Endothelial cell of umbilical vein (primary cell): ENCODE measurements at regions of chr10 and their contacts with region 1.

Region 1: DNA sequence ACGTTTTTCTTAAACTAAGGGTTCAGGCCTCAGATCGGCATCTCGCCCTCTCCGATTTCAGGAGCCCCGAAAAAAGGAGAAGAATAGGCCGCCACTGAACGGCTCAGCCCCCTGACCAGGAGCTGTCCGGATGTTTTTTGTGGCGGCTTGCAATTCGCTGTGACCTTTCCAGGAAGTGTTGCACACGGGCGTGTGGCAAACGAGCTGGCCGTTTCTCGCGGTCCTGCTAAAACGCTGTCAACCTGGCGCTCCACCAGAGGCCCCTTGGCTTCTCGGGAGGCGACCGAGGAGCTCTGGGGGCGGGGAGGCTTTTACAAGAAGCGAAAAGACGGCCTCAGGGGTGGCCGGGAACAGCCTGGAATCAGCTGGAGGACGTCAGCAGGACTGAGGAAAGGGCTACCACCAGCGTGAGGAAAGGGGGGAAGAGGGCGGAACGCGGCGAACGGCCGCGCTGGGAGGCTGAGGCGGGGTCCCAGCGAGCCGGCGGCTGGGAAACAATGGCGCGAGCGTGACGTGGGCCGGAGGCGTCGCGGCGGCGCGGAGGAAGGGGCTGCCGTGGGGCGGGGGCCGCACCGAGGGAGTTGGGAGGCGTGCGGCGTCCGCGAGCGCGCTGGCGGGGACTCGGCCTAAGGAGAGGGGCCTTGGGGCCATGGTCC is 493 bp downstream of the NT5C2 start:
- DNase-seq: peak; percentile 90
- H3K4me3 ChIP-seq: peak overlapping the region; percentile 61 to 95 (median 71)
- H3K27ac ChIP-seq: peak overlapping the region; percentile 80
- H3K4me1 ChIP-seq: peaks cover 35% of the 10 kb centered on the region
- H3K27me3 ChIP-seq: no peaks in the 10 kb centered on the region
- CTCF ChIP-seq: no peak
- POLR2A ChIP-seq: peak; percentile 48

Region 2: DNA sequence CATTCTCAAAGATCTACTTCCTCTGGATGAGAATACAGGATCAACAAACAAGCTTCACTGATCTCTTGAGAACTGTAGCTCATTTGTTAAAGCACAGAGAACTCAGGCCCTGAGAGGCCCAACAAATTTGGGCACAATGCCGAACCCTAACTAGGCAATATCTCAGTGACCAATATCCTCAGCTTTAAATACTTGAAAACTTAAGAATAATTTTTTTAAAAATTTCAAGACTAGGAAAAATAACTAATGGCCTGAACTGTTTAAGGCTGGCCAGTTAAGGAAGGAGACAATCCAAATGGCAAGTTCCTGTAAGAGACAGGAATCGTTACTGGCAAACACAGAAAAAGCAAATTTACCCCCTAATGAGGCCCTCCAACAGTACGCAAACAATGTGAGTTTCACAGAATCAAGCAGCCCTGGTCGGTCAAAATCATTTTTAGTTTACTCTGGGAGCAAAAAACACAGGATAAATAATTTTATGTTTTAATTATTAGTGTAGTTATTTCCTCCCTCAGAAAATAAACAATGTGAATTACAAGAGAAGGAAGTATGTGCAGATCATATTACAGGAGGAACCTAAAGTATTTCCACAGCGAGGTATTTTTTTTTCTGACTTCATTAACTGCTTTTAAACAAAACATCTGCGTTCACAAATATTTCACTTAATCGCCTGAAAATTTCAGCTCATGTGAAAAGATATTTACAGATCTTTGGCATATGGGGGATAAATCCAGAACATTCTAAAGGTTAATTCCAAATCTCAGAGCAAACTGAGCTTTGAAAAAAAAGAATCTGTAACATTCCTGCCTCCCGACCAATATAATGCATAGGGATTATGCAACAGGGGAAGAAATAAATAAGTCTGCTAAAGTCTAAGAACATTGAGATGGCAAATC is 39.0 kb before region 1 on chr10:
- CTCF ChIA-PET with region 1: interaction called, 10 read pairs
- POLR2A ChIA-PET with region 1: interaction called, 6 read pairs
- dilution Hi-C with region 1: no loop called
- intact Hi-C with region 1: loop called (anchors 2 kb)
- DNase-seq: peak; percentile 71
- H3K4me3 ChIP-seq: peak overlapping the region in 2 of 3 experiments; percentile 2 to 56
- H3K27ac ChIP-seq: peak overlapping the region; percentile 91
- H3K4me1 ChIP-seq: peaks cover 39% of the 10 kb centered on the region
- H3K27me3 ChIP-seq: no peaks in the 10 kb centered on the region
- CTCF ChIP-seq: no peak
- POLR2A ChIP-seq: no peak

Region 3: DNA sequence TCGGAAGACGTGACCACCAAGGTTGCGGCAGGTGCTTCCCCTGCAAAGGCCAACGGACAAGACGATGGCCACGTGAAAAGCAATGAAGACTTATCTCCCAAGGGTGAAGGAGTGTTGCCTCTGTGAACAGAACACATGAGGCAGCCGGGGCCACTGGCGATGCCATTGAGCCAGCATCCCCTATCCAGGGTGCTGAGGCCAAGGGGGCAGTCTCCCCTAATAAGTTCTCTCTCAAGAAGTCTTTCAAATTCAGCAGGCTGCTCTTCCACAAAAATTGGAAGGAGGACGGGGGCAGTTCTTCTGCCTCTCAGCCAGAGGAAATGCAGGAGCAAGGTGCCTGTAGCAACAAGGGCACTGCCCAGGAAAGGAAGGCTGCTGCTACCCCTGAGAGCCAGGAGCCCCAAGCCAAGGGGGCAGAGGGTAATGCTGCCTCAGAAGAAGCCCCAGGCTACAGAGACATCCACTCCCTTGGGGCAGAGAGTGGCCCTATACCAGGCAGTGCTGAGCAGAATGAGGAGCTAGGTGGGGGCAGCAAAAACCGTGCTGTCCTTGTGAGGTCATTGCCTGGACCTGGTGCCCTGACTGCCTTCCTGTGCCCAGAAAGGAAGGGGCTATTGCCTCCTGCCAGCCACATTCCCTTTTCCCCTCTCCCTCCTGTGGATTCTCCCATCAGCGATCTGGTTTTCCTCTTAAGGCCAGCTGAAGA is 16.8 kb before region 1 on chr10:
- CTCF ChIA-PET with region 1: interaction called, 4 read pairs
- POLR2A ChIA-PET with region 1: interaction called, 20 read pairs
- dilution Hi-C with region 1: no loop called
- intact Hi-C with region 1: no loop called
- DNase-seq: no peak
- H3K4me3 ChIP-seq: no peak overlapping the region
- H3K27ac ChIP-seq: no peak overlapping the region
- H3K4me1 ChIP-seq: peaks cover 12% of the 10 kb centered on the region
- H3K27me3 ChIP-seq: no peaks in the 10 kb centered on the region
- CTCF ChIP-seq: no peak
- POLR2A ChIP-seq: no peak

Region 4: DNA sequence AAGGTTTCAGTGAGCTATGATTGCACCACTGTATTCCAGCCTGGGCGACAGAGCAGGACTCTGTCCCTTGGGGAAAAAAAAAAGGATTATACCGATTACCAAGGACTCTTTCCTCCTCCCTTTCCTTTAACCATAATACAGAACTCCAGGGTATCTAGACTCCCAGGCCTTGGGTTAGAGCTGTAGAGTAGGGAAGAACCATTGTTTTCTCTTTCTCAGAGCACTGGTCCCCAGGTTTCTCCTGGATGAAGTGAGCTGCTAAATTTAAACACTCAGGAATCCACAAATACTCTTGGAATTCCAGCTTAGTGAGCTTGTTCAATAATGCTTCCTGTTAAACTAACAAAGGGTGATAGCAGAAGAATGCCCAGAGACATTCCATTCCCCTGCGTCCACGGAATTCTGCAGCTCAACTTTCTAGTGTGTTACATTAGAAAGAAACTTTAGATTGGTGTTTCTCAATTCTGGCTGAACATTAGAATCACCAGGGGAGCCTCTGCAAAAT is 38.5 kb after region 1 on chr10:
- CTCF ChIA-PET with region 1: interaction called, 9 read pairs
- POLR2A ChIA-PET with region 1: interaction called, 28 read pairs
- dilution Hi-C with region 1: no loop called
- intact Hi-C with region 1: loop called (anchors 1 kb)
- DNase-seq: peak; percentile 92
- H3K4me3 ChIP-seq: no peak overlapping the region
- H3K27ac ChIP-seq: peak overlapping the region; percentile 97
- H3K4me1 ChIP-seq: peaks cover 32% of the 10 kb centered on the region
- H3K27me3 ChIP-seq: no peaks in the 10 kb centered on the region
- CTCF ChIP-seq: no peak
- POLR2A ChIP-seq: peak; percentile 60